ENCODE measurements at regions of chr1 and their contacts with region 1.

Region 1: DNA sequence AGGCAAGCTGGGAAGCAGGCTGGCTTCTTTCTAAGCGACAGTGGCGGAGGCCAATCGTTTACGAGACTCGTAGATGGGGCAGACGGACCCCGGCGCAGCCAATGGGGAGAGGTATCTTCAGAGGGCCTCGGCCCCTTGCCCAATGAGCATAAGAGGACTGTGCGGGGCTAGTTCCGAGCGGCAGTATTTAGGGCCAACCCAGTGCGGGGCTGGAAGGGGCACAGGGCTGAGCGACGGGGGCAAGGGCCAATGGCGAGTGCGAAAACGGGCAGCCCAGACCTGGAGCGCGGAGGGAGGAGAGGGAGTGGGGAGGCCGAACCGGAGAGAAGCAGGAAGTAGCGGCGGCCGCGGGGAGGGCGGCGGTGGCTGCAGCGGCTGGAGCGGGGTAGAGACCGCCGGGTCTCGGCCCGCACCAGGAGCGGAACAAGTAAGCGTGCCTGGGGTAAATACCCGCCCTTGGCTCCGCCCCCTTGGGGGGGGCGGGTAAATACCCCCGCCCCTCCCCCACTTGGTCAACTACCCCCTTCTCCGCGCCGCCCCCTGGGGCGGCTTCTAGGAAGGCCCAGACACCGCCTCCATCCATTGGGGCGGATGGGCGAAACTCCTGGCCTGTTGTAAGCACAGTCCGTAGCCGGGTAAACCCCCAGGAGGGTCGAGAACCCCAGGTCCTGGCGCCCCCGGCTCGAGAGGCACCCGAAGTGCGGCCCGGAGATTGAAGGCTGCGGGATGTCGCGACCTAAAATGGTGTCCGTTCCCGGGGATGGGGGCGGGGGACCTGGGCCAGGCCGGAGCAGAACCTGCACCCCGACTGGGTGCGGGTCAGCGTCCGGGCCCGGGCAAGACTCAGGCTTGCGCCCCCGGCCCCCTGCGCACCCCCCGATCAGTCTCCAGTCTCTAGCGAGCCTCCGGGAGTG is at the start of gene ZNF687:
- DNase-seq: peak; percentile 99
- H3K4me3 Mint-ChIP-seq: peak within 1 kb of the TSS; percentile 95
- H3K27ac Mint-ChIP-seq: peak within 1 kb of the TSS; percentile 98
- H3K4me1 Mint-ChIP-seq: peaks cover 38% of the 10 kb centered on the region
- H3K27me3 Mint-ChIP-seq: no peaks in the 10 kb centered on the region
- total RNA-seq, gene ZNF687: 31.4 to 32.6 TPM

Region 2: GRCh38 chr1:151189638-151190445 is 92.4 kb before region 1 on chr1 and contains the start of gene VPS72:
- CTCF ChIA-PET with region 1: interaction called, 3 read pairs
- POLR2A ChIA-PET with region 1: interaction called, 17 read pairs
- DNase-seq: peak; percentile 89
- H3K4me3 Mint-ChIP-seq: peak within 1 kb of the TSS; percentile 100
- H3K27ac Mint-ChIP-seq: peak within 1 kb of the TSS; percentile 95
- H3K4me1 Mint-ChIP-seq: peaks cover 35% of the 10 kb centered on the region
- H3K27me3 Mint-ChIP-seq: peaks cover 3% of the 10 kb centered on the region
- total RNA-seq, gene VPS72: 76.1 to 78.8 TPM

Region 3: GRCh38 chr1:151198255-151199127 is 83.7 kb before region 1 on chr1 and contains the start of gene PIP5K1A:
- CTCF ChIA-PET with region 1: interaction called, 4 read pairs
- POLR2A ChIA-PET with region 1: interaction called, 10 read pairs
- DNase-seq: peak; percentile 99
- H3K4me3 Mint-ChIP-seq: peak within 1 kb of the TSS; percentile 89
- H3K27ac Mint-ChIP-seq: peak within 1 kb of the TSS; percentile 84
- H3K4me1 Mint-ChIP-seq: peaks cover 43% of the 10 kb centered on the region
- H3K27me3 Mint-ChIP-seq: peaks cover 7% of the 10 kb centered on the region
- total RNA-seq, gene PIP5K1A: 53.9 to 61.1 TPM

Region 4: DNA sequence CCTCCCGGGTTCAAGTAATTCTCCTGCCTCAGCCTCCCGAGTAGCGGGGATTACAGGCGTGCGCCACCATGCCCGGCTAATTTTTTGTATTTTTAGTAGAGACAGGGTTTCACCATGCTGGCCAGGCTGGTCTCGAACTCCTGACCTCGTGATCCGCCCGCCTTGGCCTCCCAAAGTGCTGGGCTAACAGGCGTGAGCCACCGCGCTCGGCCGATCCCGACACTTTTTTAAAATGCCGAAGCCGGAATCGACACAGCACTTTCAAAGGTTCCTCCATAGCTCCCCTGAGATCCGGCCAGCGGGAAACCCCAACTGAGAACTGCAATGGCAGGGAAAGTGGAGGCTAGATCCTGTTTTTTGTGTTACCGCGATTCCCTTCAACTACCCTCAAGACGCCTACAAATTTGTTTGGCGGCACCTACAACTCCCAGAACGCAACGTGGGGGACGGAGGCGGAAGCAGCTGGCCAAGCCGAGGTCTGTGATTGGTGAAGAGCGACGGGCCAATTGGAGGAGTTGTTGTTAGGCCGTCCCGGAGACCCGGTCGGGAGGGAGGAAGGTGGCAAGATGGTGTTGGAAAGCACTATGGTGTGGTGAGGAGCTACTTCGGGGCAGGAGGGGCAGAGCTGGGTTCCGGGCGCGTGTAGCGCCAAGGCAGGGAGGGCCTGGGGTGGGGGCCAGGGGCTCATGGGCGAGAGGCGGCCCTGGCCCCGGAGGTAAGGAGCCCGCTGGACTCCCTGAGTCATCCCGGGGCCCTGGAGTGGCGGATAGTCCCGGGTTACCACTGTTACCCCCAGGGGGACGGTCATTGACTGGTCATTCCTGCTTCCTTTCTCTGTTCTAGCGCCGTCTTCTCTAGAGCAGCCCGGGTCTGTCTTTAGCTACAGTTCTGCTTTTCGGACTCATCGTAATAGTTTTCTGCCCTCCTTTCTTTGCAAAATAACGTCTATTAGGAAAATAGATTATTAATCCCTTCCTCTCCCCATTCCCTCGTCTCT is 27.7 kb before region 1 on chr1 and contains the start of gene PSMD4:
- CTCF ChIA-PET with region 1: interaction called, 9 read pairs
- POLR2A ChIA-PET with region 1: interaction called, 38 read pairs
- DNase-seq: peak; percentile 95
- H3K4me3 Mint-ChIP-seq: peak within 1 kb of the TSS; percentile 87
- H3K27ac Mint-ChIP-seq: peak within 1 kb of the TSS; percentile 83
- H3K4me1 Mint-ChIP-seq: peaks cover 29% of the 10 kb centered on the region
- H3K27me3 Mint-ChIP-seq: no peaks in the 10 kb centered on the region
- total RNA-seq, gene PSMD4: 178 to 188 TPM

Region 5: GRCh38 chr1:151292207-151293030 is 10.2 kb after region 1 on chr1:
- CTCF ChIA-PET with region 1: interaction called, 3 read pairs
- POLR2A ChIA-PET with region 1: interaction called, 16 read pairs
- DNase-seq: no peak
- H3K4me3 Mint-ChIP-seq: no peak overlapping the region
- H3K27ac Mint-ChIP-seq: peak overlapping the region; percentile 31
- H3K4me1 Mint-ChIP-seq: peaks cover 4% of the 10 kb centered on the region
- H3K27me3 Mint-ChIP-seq: no peaks in the 10 kb centered on the region

Region 6: DNA sequence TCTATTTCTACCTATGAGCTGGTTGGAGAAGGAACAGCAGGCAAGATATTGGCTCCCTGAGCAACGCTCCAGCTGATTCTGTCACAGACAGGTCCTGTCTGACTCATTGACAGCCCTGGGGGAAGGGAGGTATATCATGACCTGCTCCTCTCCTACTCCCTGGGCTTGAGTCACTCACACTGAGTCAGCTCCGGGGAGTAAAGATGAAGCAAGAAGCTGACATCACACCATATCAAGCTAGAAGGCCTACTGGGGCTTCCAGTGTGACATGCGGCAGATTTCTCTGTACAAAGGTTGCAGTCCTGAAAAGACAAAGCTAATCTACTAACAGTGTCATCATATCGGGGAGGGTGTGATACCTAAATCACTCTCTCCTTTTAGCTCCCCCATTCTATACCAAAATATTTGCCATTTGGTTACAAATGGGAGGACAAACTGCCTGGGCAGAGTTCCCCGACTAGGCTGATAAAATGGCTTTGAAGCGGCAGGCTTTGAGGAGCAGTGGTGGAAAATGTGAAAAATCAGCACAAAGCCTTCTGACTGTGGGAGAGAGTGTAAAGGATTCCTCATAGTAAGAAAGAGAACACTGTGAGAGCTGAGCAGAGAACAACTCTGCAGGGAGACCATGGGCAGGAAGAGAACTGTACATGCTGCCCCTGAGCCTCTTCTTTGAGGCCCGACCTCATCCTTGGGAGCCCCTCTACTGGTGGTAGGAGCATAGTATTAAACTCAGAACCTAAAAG is 29.5 kb after region 1 on chr1:
- CTCF ChIA-PET with region 1: interaction called, 12 read pairs
- POLR2A ChIA-PET with region 1: interaction called, 12 read pairs
- DNase-seq: peak; percentile 80
- H3K4me3 Mint-ChIP-seq: no peak overlapping the region
- H3K27ac Mint-ChIP-seq: peak overlapping the region; percentile 86
- H3K4me1 Mint-ChIP-seq: peaks cover 23% of the 10 kb centered on the region
- H3K27me3 Mint-ChIP-seq: no peaks in the 10 kb centered on the region

Region 7: GRCh38 chr1:151327223-151327902 is 45.1 kb after region 1 on chr1 and contains the start of gene PI4KB:
- CTCF ChIA-PET with region 1: interaction called, 9 read pairs
- POLR2A ChIA-PET with region 1: interaction called, 29 read pairs
- DNase-seq: peak; percentile 93
- H3K4me3 Mint-ChIP-seq: peak within 1 kb of the TSS; percentile 98
- H3K27ac Mint-ChIP-seq: peak within 1 kb of the TSS; percentile 95
- H3K4me1 Mint-ChIP-seq: peaks cover 36% of the 10 kb centered on the region
- H3K27me3 Mint-ChIP-seq: no peaks in the 10 kb centered on the region
- total RNA-seq, gene PI4KB: 71.2 to 72.9 TPM

Region 8: DNA sequence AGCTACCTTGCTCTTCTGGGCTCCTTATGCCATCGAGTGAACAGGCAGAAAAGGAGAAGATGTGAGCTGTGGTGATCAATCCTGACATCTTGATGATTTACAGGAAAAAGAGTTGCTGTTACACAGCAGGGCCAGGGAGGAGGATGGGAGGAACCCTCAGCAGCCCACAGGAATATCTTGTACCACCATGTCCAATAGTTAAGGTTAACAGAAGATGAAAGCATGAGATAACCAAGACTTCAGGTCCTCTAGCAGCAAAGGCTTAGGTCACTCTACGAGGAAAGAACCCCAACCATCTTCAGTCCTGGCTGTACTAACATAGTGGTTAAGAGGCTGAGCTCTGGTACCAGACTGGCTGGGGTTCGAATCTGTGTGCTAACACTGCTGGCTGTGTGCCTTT is 102.4 kb after region 1 on chr1:
- CTCF ChIA-PET with region 1: no interaction called
- POLR2A ChIA-PET with region 1: no interaction called
- DNase-seq: no peak
- H3K4me3 Mint-ChIP-seq: no peak overlapping the region
- H3K27ac Mint-ChIP-seq: no peak overlapping the region
- H3K4me1 Mint-ChIP-seq: no peaks in the 10 kb centered on the region
- H3K27me3 Mint-ChIP-seq: no peaks in the 10 kb centered on the region

Region 9: GRCh38 chr1:151619489-151620093 is 337.4 kb after region 1 on chr1:
- CTCF ChIA-PET with region 1: no interaction called
- POLR2A ChIA-PET with region 1: no interaction called
- DNase-seq: no peak
- H3K4me3 Mint-ChIP-seq: no peak overlapping the region
- H3K27ac Mint-ChIP-seq: no peak overlapping the region
- H3K4me1 Mint-ChIP-seq: peaks cover 43% of the 10 kb centered on the region
- H3K27me3 Mint-ChIP-seq: no peaks in the 10 kb centered on the region

Measured in activated CD4-positive, alpha-beta memory T cell treated with anti-CD3 and anti-CD28 coated beads, Interleukin-2, amount 10 ng/mL, durations not matched to agents 7 days and 5 days (primary cell).